ENCODE measurements at regions of chr1 and their contacts with region 1.

Region 1: DNA sequence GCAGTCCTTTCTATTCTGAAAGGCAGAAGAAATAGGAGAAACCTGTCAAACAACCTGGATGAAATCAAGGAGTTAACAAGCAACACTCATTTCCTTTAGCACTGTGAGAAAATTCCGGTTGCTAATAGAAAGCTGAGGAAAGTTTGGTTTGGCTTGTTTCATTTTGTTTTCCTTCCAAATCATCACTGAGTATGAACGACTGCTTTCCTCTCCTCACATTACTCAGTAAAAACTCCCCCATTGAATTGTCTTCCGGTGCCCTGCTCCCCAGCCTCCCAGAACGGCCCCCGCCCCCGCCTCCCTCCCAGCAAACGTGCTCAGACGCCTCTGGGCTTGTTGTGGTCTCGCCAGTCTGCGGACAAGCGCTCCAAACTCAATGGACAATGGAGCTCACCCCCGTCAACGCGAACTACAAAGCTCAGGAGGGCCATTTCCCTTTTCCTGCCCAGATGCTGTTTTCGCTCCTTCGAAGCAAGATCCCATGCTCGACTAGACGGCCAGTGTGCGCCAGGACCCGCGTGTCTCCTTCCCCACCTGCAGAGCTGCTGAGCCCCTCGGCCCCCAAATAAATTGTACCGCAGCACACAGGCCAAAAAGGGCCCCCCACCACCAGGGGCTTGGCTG is 747 bp downstream of the STX6 start:
- DNase-seq: peak; percentile 82
- H3K4me3 ChIP-seq: peak overlapping the region; percentile 89 to 99 (median 98)
- H3K27ac ChIP-seq: peak overlapping the region; percentile 90 to 97 (median 96)
- H3K4me1 ChIP-seq: peaks cover 5 to 20% (median 18%) of the 10 kb centered on the region in 4 donors
- H3K27me3 ChIP-seq: no peaks in the 10 kb centered on the region
- CTCF ChIP-seq: no peak
- EP300 ChIP-seq: no peak
- POLR2A ChIP-seq: no peak

Region 2: DNA sequence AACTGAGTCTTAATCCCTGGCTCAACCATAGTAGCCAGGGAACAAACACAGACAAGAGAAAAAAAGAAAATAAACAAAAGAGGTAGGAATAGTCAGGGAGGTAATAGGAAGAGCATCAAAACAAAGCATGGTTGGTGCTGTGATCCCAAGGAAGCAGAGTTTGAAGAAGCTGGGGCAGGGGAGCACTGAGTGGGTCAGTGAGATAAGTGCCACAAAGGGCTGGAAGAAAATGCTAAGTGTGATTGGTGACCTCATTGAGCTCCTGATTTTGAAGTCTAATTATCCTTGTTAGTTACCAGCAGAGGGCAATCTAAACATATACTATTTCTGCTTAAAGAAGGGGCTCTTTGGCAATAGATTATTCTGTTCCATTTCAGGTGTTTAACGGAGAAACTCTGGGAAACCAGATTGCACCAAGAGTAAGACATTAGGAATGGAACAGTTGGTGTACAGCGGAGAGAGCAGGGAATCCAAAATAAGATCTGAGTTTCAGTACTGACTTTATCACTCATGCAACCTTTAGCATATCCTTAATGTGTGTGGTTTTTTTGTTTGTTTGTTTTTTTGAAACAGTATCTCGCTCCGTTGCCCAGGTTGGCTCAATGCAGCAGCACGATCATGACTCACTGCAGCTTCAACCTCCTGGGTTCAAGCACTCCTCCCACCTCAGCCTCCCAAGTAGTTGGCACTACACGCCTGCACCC is 140.0 kb before region 1 on chr1:
- intact Hi-C with region 1: loop called (anchors 10 kb)
- DNase-seq: no peak
- H3K4me3 ChIP-seq: no peak overlapping the region
- H3K27ac ChIP-seq: no peak overlapping the region
- H3K4me1 ChIP-seq: no peaks in the 10 kb centered on the region
- H3K27me3 ChIP-seq: no peaks in the 10 kb centered on the region
- CTCF ChIP-seq: peak; percentile 21 to 46 (median 36)
- EP300 ChIP-seq: no peak
- POLR2A ChIP-seq: no peak

Region 3: DNA sequence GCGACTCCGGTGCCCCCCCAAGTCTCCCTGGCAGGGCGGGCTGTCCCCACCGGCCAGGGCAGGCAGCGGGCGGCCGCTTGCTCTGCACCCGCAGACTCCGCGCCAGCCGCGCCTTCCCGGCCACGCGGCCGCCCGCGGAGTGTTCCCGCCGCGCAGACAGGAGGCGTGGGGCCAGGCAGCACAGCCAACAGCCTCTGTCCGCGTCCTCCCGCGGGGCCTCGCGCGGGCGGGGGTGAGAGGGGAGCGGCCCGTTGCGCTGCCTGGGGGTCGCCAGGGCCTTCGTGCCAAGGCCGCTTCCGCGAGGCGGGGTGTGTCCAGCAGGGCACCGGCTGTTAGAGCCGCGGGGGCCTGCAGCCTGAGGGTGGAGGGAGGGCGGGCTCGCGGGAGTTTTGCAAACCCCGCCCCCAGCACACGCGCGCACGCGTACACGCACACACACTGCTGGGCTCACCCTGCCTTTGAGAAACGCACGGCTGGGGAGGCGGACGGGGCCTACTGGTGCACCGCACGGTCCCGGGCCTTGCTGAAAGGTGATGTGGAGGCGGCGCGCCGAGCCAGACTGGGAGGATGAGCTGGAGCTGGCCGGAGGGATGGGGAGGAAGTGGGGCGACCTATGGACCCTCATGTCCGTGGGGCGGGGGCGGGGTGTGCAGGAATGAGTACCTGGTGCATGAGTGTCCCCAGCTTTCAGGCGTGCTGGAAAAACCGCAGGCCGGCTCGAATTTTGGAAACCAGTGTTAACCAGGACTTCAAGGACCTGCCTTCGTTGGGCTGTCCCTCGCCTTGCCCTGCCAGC is 67.7 kb before region 1 on chr1:
- intact Hi-C with region 1: loop called (anchors 1 kb)
- DNase-seq: peak; percentile 90
- H3K4me3 ChIP-seq: peak overlapping the region; percentile 48 to 65 (median 56)
- H3K27ac ChIP-seq: peak overlapping the region; percentile 54 to 81 (median 77)
- H3K4me1 ChIP-seq: peaks cover 0 to 21% (median 14%) of the 10 kb centered on the region in 4 donors
- H3K27me3 ChIP-seq: no peaks in the 10 kb centered on the region
- CTCF ChIP-seq: peak in 1 of 4 experiments; percentile 7
- EP300 ChIP-seq: no peak
- POLR2A ChIP-seq: no peak

Region 4: GRCh38 chr1:181128592-181129497 is 106.9 kb after region 1 on chr1:
- intact Hi-C with region 1: no loop called
- DNase-seq: no peak
- H3K4me3 ChIP-seq: no peak overlapping the region
- H3K27ac ChIP-seq: peak overlapping the region in 3 of 4 donors; percentile 14 to 45 (median 42)
- H3K4me1 ChIP-seq: peaks cover 0 to 12% (median 0%) of the 10 kb centered on the region in 4 donors
- H3K27me3 ChIP-seq: no peaks in the 10 kb centered on the region
- CTCF ChIP-seq: no peak
- EP300 ChIP-seq: no peak
- POLR2A ChIP-seq: no peak

Region 5: DNA sequence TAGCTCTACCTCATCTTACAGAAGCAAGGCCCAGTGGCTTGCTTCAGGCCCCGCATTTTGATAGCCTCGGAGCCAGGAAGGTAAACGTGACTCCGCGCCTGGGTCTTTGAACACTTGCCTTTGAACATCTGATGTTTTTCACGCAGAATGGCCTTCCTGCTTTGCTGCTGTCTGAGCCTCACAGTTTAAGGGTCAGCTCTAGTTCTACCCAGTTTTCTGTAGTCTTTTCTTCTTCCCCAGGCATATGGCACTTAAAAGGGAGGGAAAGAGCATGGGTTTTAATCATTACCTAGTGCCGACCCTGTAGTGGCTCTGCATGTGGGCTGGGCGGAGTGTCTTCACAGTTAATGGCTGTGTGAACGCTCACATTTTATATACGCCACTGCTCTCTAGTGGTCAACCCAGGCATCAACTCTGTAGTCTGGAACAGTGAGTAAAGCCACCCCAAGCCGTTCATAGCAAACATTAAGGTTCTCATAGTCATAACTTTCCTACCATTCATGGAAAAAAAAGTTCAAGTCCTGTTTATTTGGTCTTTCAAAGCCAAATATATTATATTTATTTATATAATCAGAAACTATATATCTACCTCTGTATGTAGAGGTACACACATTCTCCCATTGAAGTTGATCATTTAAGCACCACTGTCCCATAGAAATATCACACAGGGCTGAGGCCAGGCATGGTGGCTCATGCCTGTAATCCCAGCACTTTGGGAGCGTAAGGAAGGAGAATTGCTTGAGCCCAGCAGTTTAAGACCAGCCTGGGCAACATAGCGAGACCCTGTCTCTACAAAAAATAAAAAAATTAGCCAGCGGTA is 144.7 kb after region 1 on chr1:
- intact Hi-C with region 1: no loop called
- DNase-seq: peak; percentile 79
- H3K4me3 ChIP-seq: no peak overlapping the region
- H3K27ac ChIP-seq: no peak overlapping the region
- H3K4me1 ChIP-seq: peaks cover 0 to 6% (median 4%) of the 10 kb centered on the region in 4 donors
- H3K27me3 ChIP-seq: no peaks in the 10 kb centered on the region
- CTCF ChIP-seq: peak; percentile 63 to 84 (median 74)
- EP300 ChIP-seq: no peak
- POLR2A ChIP-seq: no peak